Right lobe of liver (tissue), 6 donors: ENCODE measurements at regions of chr2 and their contacts with region 1.

Region 1: GRCh38 chr2:88055371-88056128 is at the start of gene KRCC1:
- DNase-seq: peak; percentile 96 to 98 (median 98)
- ATAC-seq: peak; percentile 88 to 97 (median 96)
- H3K4me3 ChIP-seq: peak within 1 kb of the TSS; percentile 70 to 87 (median 82)
- H3K27ac ChIP-seq: peak within 1 kb of the TSS; percentile 82 to 99 (median 87)
- H3K4me1 ChIP-seq: peaks cover 0 to 35% (median 11%) of the 10 kb centered on the region in 4 donors
- H3K27me3 ChIP-seq: no peaks in the 10 kb centered on the region
- CTCF ChIP-seq: peak in 3 of 4 donors; percentile 3 to 12 (median 11)
- POLR2A ChIP-seq: peak; percentile 98
- total RNA-seq, gene KRCC1: 9.3 to 17.1 (median 11.5) TPM

Region 2: DNA sequence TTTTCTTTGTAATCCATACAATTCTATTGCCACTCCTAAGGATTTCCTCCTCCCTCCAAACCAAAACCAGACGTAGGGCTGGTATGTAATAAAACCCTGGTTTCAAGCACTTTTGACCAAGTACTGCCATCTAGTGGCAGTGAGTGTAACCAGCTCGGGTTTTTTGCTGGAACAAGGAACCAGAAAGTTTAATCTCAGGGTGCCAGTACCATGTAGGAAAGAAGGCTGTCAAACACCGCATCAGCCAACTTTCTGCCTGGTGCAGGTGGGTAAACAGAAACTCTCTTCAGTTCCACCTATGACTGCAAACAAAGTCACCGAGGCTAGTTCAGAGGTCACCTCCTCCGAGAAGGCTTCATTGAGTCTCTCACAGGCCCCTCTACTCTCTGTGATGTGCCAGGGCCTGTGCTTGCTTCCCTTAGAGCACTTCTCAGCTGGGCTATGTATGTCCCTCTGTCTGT is 104.4 kb after region 1 on chr2:
- intact Hi-C with region 1: loop called in 1 of 2 experiments (anchors 5 kb)
- DNase-seq: peak in 1 of 3 donors; percentile 78
- ATAC-seq: peak; percentile 95 to 99 (median 97)
- H3K4me3 ChIP-seq: no peak overlapping the region
- H3K27ac ChIP-seq: peak overlapping the region; percentile 30 to 57 (median 42)
- H3K4me1 ChIP-seq: peaks cover 0 to 13% (median 0%) of the 10 kb centered on the region in 4 donors
- H3K27me3 ChIP-seq: no peaks in the 10 kb centered on the region
- CTCF ChIP-seq: peak; percentile 88 to 94 (median 92)
- POLR2A ChIP-seq: no peak